HCT116 (cell line): ENCODE measurements at regions of chr1 and their contacts with region 1.

Region 1: DNA sequence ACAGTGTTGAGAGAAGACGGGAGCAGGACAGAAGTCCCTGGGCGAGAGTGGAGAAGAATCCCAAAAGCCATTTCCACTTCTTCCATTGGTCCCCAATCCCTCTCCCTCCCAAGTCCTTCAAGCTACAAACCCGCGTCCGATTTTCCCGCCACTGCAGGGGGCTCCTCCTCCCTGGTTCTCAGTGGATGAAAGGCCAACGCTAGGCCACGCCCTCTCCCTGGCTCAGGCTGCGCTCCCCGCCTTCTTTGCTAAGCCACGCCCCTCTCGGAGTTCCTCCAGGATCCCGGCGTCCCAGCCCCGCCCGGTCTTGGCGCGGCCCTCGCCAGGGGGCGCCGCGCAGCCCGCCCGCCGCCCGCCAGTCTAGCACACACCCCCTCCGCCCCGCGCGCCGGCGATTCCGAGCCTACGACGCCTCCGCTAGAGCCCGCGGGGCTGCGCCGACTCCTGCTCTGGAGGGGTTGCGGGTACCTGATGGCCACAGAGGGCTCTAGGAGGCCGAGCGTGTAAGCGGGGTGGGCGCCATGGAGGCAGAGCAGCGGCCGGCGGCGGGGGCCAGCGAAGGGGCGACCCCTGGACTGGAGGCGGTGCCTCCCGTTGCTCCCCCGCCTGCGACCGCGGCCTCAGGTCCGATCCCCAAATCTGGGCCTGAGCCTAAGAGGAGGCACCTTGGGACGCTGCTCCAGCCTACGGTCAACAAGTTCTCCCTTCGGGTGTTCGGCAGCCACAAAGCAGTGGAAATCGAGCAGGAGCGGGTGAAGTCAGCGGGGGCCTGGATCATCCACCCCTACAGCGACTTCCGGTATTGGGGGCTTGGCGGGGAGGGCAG is at the start of gene HCN3:
- DNase-seq: peak; percentile 94
- ATAC-seq: peak; percentile 71
- H3K4me3 ChIP-seq: peak within 1 kb of the TSS; percentile 76 to 85
- H3K27ac ChIP-seq: peak within 1 kb of the TSS; percentile 63
- H3K4me1 ChIP-seq: peaks cover 10 to 33% of the 10 kb centered on the region in 2 experiments
- H3K27me3 ChIP-seq: no peaks in the 10 kb centered on the region
- CTCF ChIP-seq: peak; percentile 27 to 60 (median 46); a peak in 5 of 6 replicates
- POLR2A ChIP-seq: no peak
- RAD21 ChIP-seq: no peak; the same call in 1 of the 2 replicates
- total RNA-seq, gene HCN3: 8.5 TPM

Region 2: GRCh38 chr1:154652893-154653292 is 624.4 kb before region 1 on chr1:
- CTCF ChIA-PET with region 1: no interaction called
- POLR2A ChIA-PET with region 1: no interaction called
- RAD21 ChIA-PET with region 1: no interaction called
- intact Hi-C with region 1: no loop called
- DNase-seq: no peak
- ATAC-seq: no peak
- H3K4me3 ChIP-seq: no peak overlapping the region
- H3K27ac ChIP-seq: no peak overlapping the region
- H3K4me1 ChIP-seq: no peaks in the 10 kb centered on the region
- H3K27me3 ChIP-seq: no peaks in the 10 kb centered on the region
- CTCF ChIP-seq: no peak
- POLR2A ChIP-seq: no peak
- RAD21 ChIP-seq: no peak

Region 3: DNA sequence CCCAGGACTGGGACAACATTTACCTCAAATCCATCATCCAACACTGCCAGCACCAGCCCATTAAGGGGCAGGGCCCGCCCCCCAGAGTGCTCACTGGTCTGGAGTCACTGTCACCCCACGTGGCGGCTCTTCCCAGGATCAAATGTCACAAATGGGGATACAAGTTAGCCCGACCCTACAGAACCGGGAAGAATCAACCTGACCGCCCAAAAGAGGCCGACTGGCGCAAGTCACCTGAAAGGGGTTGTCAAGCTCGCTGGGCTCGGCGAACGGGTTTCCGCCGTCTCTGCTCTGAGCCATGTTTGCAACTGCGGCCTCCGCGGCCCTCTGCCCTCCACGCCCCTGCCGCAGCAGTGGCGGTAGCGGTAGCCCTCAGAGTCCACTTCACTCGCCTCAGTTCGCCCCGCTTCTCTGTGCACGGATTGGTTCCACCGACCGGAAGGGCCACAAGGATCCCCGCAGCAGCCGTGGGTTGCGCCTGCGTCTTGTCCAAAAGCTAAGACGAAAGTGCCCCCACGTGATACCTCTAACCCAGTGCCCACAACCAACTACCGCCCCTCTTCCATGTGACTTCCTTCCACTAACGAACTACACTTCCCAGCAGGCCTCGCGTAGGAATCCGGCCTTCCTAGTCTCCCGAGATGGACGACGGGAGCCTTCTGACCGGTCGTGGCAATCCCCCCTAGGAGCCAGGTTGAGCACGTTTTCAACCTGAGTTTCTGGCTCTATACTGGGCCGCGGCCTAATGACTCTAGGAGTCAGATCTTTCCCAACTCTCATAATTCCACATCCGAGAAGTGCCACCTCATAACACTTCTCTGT is 15.2 kb before region 1 on chr1 and contains the start of gene SCAMP3:
- CTCF ChIA-PET with region 1: no interaction called
- POLR2A ChIA-PET with region 1: interaction called, 19 read pairs
- RAD21 ChIA-PET with region 1: no interaction called
- intact Hi-C with region 1: no loop called
- DNase-seq: peak; percentile 97
- ATAC-seq: peak; percentile 95
- H3K4me3 ChIP-seq: peak within 1 kb of the TSS; percentile 92 to 94
- H3K27ac ChIP-seq: peak within 1 kb of the TSS; percentile 68
- H3K4me1 ChIP-seq: peaks cover 7 to 15% of the 10 kb centered on the region in 2 experiments; a peak in 3 of 4 replicates
- H3K27me3 ChIP-seq: no peaks in the 10 kb centered on the region
- CTCF ChIP-seq: no peak
- POLR2A ChIP-seq: peak; percentile 40
- RAD21 ChIP-seq: no peak
- total RNA-seq, gene SCAMP3: 64.2 TPM

Region 4: GRCh38 chr1:155323798-155324610 is 46.7 kb after region 1 on chr1:
- CTCF ChIA-PET with region 1: interaction called, 6 read pairs
- POLR2A ChIA-PET with region 1: interaction called, 11 read pairs
- RAD21 ChIA-PET with region 1: interaction called, 3 to 5 read pairs
- intact Hi-C with region 1: loop called (anchors 1 kb)
- DNase-seq: peak; percentile 89
- ATAC-seq: peak; percentile 77
- H3K4me3 ChIP-seq: peak overlapping the region; percentile 83 to 96
- H3K27ac ChIP-seq: peak overlapping the region; percentile 96
- H3K4me1 ChIP-seq: peaks cover 15 to 25% of the 10 kb centered on the region in 2 experiments
- H3K27me3 ChIP-seq: no peaks in the 10 kb centered on the region
- CTCF ChIP-seq: no peak
- POLR2A ChIP-seq: peak; percentile 85
- RAD21 ChIP-seq: no peak

Region 5: DNA sequence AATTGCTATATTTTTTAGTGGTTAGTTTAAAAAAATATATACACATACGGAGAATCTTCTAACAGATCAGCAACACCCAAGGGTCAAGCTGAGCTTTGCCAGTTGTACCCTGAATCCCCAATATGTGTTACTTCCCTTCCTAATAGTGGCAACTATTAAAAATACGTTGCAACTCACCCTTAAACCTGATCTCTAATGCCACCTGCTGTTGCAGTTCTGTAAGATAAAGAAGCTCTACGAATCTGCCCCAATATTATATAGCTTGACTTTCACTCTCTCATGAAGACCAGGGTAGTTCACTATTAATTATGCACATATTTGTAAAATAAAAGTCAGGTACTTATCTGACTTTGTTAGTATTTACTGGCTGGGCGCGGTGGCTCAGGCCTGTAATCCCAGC is 226.9 kb after region 1 on chr1:
- CTCF ChIA-PET with region 1: no interaction called
- POLR2A ChIA-PET with region 1: no interaction called
- RAD21 ChIA-PET with region 1: no interaction called
- intact Hi-C with region 1: loop called (anchors 5 kb)
- DNase-seq: peak; percentile 24
- ATAC-seq: peak; percentile 88
- H3K4me3 ChIP-seq: no peak overlapping the region
- H3K27ac ChIP-seq: no peak overlapping the region
- H3K4me1 ChIP-seq: no peaks in the 10 kb centered on the region
- H3K27me3 ChIP-seq: no peaks in the 10 kb centered on the region
- CTCF ChIP-seq: peak; percentile 23 to 47 (median 46); a peak in 4 of 6 replicates
- POLR2A ChIP-seq: no peak
- RAD21 ChIP-seq: peak; percentile 68